ENCODE measurements at regions of chr12 and their contacts with region 1.

Region 1: GRCh38 chr12:78210894-78211302 is 380.2 kb downstream of the NAV3 start:
- DNase-seq: peak; percentile 92
- ATAC-seq: peak; percentile 84
- H3K4me3 ChIP-seq: no peak overlapping the region
- H3K27ac ChIP-seq: peak overlapping the region; percentile 10
- H3K4me1 ChIP-seq: peaks cover 23% of the 10 kb centered on the region
- H3K27me3 ChIP-seq: no peaks in the 10 kb centered on the region
- CTCF ChIP-seq: no peak

Region 2: DNA sequence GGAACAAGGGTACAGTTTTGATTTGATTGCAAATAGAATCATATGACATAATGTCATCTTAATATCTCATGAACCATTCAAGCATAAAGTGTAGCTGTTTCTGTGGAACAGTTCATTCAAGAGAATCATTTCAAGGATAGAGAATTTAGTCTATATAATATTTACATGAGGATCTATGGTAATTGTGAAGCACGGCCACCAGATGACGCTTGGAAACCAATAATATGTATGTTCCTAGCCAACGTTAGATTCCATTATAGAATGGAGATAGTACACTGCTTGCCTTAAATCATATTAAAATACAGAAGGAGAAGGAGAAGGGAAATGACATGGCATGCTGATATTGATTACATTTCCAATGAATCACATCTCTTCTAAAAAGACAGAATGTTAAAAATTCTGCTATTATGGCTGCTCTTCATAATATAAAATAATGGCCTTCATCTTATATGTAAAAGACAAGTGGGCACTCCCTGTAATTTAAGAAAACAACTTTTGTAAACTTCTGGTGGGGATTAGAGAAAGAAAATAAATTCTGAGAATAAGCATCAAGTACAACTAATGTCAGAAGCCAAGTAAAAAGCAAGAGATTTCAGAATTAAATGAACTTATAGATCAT is 29.2 kb before region 1 on chr12:
- CTCF ChIA-PET with region 1: no interaction called
- POLR2A ChIA-PET with region 1: no interaction called
- intact Hi-C with region 1: no loop called
- DNase-seq: peak; percentile 73
- ATAC-seq: peak; percentile 62
- H3K4me3 ChIP-seq: no peak overlapping the region
- H3K27ac ChIP-seq: no peak overlapping the region
- H3K4me1 ChIP-seq: peaks cover 30% of the 10 kb centered on the region
- H3K27me3 ChIP-seq: no peaks in the 10 kb centered on the region
- CTCF ChIP-seq: peak; percentile 89

Region 3: GRCh38 chr12:78194448-78194847 is 16.4 kb before region 1 on chr12:
- CTCF ChIA-PET with region 1: no interaction called
- POLR2A ChIA-PET with region 1: no interaction called
- intact Hi-C with region 1: loop called (anchors 2 kb)
- DNase-seq: peak; percentile 82
- ATAC-seq: peak; percentile 85
- H3K4me3 ChIP-seq: no peak overlapping the region
- H3K27ac ChIP-seq: peak overlapping the region; percentile 52
- H3K4me1 ChIP-seq: peaks cover 40% of the 10 kb centered on the region
- H3K27me3 ChIP-seq: no peaks in the 10 kb centered on the region
- CTCF ChIP-seq: no peak

Region 4: GRCh38 chr12:78308701-78309100 is 97.8 kb after region 1 on chr12:
- CTCF ChIA-PET with region 1: no interaction called
- POLR2A ChIA-PET with region 1: no interaction called
- intact Hi-C with region 1: loop called (anchors 5 kb)
- DNase-seq: peak; percentile 45
- ATAC-seq: peak; percentile 50
- H3K4me3 ChIP-seq: no peak overlapping the region
- H3K27ac ChIP-seq: no peak overlapping the region
- H3K4me1 ChIP-seq: peaks cover 30% of the 10 kb centered on the region
- H3K27me3 ChIP-seq: no peaks in the 10 kb centered on the region
- CTCF ChIP-seq: no peak

Measured in PC-3 (cell line).